AG04450 (cell line): ENCODE measurements at regions of chr10 and their contacts with region 1.

Region 1: GRCh38 chr10:77391605-77392235 is 245.9 kb downstream of the KCNMA1 start:
- DNase-seq: peak; percentile 73
- H3K4me3 ChIP-seq: no peak overlapping the region
- H3K27ac ChIP-seq: peak overlapping the region; percentile 78
- H3K27me3 ChIP-seq: no peaks in the 10 kb centered on the region
- CTCF ChIP-seq: peak; percentile 79

Region 2: GRCh38 chr10:77041636-77042258 is 350.0 kb before region 1 on chr10:
- CTCF ChIA-PET with region 1: no interaction called
- POLR2A ChIA-PET with region 1: no interaction called
- DNase-seq: no peak
- H3K4me3 ChIP-seq: no peak overlapping the region
- H3K27ac ChIP-seq: no peak overlapping the region
- H3K27me3 ChIP-seq: no peaks in the 10 kb centered on the region
- CTCF ChIP-seq: no peak

Region 3: DNA sequence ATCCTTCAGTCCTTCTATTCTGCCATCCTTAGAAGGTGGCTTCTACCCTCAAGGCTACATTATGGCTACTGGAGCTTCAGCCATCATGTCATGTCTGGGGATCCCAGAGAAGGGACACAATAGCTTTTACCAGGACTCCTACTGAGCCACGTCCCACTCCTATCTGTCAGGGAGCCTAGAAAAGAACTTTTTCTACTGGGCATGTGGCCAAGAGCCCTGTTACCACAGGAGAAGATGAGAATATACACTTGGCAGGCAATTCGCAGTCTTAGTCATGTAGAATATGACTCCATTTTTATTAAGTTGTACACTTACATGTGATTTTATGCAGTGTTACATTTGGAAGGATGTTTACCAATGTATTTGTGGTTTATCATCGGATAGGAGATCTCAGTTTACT is 310.4 kb after region 1 on chr10:
- CTCF ChIA-PET with region 1: no interaction called
- POLR2A ChIA-PET with region 1: no interaction called
- DNase-seq: peak; percentile 63
- H3K4me3 ChIP-seq: no peak overlapping the region
- H3K27ac ChIP-seq: no peak overlapping the region
- H3K27me3 ChIP-seq: no peaks in the 10 kb centered on the region
- CTCF ChIP-seq: no peak

Region 4: GRCh38 chr10:77716482-77717317 is 325.0 kb after region 1 on chr10:
- CTCF ChIA-PET with region 1: interaction called, 20 read pairs
- POLR2A ChIA-PET with region 1: interaction called, 3 read pairs
- DNase-seq: no peak
- H3K4me3 ChIP-seq: no peak overlapping the region
- H3K27ac ChIP-seq: no peak overlapping the region
- H3K27me3 ChIP-seq: peaks cover 5% of the 10 kb centered on the region
- CTCF ChIP-seq: no peak

Region 5: GRCh38 chr10:77857254-77857653 is 465.5 kb after region 1 on chr10:
- CTCF ChIA-PET with region 1: no interaction called
- POLR2A ChIA-PET with region 1: no interaction called
- DNase-seq: no peak
- H3K4me3 ChIP-seq: no peak overlapping the region
- H3K27ac ChIP-seq: no peak overlapping the region
- H3K27me3 ChIP-seq: no peaks in the 10 kb centered on the region
- CTCF ChIP-seq: no peak